Activated CD4-positive, alpha-beta T cell treated with anti-CD3 and anti-CD28 coated beads, Interleukin-2, amount 10 ng/mL, durations not matched to agents 7 days and 5 days (primary cell): ENCODE measurements at regions of chr6 and their contacts with region 1.

Region 1: DNA sequence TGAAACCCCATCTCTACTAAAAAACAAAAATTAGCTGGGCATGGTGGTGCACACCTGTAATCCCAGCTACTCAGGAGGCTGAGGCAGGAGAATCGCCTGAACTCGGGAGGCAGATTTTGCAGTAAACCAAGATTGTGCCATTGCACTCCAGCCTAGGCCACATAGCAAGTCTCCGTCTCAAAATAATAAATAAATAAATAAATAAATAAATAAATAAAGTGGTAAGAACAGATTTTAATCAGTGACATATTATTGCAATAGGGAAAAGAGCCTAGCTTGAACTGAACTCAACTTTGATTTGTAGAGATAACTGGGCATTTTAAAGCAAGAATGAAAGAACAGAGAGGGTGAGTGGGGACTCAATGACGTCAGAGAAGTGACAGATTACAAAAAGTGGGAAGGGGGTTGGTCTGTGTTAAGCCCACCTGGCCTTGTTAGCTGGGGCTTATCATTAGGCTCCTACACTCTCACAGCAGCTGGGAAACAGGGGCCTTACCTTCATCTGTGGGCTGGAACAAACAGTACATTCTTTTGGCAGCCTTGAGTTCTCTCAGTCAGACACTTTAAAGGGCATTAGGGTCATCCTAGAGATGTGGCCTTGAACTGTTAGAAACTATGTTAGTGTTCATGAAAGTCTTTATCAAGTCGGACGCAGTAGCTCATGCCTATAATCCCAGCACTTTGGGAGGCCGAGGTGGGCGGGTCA is 24.5 kb upstream of the KIFC1 start:
- DNase-seq: no peak
- H3K4me3 Mint-ChIP-seq: no peak overlapping the region
- H3K27ac Mint-ChIP-seq: no peak overlapping the region
- H3K4me1 Mint-ChIP-seq: peaks cover 3% of the 10 kb centered on the region
- H3K27me3 Mint-ChIP-seq: no peaks in the 10 kb centered on the region

Region 2: DNA sequence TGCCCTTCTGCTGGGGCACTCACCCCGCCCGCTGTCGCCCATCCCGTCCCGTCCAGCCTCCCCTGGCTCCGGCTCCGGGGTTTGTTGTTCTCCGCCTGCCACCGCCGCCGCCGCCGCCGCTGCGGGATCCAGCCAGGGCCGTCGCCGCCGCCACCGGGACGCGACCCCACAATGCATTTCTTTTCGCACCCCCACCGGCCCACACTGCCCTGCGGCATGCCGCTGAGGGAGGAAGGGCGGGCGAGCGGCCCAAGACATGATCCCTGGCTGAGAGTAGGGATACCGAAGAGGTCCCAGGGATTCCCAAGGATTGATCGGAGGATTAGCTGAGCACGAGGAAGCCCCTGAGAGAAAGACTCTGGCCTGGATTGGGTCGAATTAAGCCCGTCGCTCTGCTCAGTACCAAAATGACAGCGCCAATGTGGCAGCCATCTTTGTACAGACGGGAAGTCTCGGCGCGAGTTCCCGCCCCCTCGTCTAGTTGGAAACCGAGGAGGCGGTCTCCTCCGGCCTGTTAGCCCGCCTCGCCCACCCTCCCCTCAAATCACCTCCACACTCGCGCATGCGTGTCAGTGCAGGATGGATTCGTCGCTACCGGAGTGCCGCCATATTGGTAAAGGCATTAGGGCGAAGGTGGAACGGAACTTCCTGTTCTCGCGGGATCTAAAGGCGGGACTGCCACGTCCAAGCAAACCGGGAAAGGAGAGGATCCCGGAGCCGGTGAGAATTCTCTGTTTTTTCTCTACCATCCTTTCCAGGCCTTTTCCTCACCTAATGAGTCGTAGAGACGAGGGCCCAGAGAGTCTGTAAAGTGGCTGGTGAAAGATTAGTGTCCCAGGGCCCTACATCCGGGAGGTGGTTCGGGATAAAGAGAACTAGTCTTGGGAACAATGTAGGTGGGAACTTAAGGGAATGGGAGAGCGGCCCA is 166.7 kb before region 1 on chr6 and contains the starts of genes RXRB and SLC39A7:
- CTCF ChIA-PET with region 1: no interaction called
- POLR2A ChIA-PET with region 1: no interaction called
- DNase-seq: peak; percentile 100
- H3K4me3 Mint-ChIP-seq: peak within 1 kb of the TSS; percentile 100
- H3K27ac Mint-ChIP-seq: peak within 1 kb of the TSS; percentile 99
- H3K4me1 Mint-ChIP-seq: peaks cover 68% of the 10 kb centered on the region
- H3K27me3 Mint-ChIP-seq: no peaks in the 10 kb centered on the region
- total RNA-seq, gene RXRB: 45.0 to 46.2 TPM
- total RNA-seq, gene SLC39A7: 34.8 to 48.5 TPM

Region 3: DNA sequence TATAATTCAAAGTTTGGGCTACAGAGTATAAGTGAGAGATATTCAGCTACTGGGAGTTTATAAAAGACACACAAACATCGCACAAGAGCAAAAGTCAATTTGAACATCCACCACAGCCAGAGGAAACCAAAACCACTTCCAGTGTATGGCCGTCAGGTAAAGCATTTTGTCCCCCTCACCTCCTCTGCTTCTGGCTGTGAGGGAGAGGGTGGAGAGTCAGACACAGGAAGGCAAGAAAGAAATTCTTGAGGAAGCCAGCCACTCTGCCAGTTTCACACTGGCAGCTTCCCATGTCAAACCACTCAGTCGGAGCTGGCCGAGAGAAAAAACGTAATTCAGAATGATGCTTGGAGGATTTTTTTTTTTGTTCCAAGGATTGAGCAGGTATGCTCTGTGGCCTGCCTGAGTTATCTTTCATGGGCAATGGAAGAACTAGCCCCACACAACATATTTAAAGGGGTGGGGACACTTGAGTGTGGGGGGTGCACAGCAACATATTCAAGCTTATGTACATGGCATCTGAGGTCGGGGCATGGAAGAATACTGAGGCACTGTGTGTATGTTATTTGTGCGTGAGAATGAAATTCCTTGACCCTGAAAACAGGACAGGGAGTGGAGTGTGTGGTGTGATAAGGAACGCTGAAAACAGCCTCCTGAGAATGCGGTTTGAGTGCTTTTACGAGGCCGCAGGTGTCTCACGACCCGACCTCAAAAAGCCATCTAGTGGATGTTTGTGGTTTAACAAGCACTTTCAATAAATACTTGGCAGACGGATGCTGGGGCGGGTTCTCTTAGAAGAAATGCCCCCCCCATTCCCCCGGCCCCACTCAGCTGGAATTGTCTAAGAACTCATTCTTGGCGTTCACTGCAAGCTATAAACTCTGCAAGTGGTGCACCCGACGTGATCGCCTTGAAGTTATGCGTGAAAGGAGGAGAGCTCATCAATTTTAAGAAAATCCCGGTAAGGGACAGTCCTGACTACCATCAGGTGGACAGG is 22.2 kb before region 1 on chr6:
- CTCF ChIA-PET with region 1: interaction called, 11 read pairs
- POLR2A ChIA-PET with region 1: no interaction called
- DNase-seq: peak; percentile 82
- H3K4me3 Mint-ChIP-seq: peak overlapping the region; percentile 69
- H3K27ac Mint-ChIP-seq: peak overlapping the region; percentile 94
- H3K4me1 Mint-ChIP-seq: peaks cover 47% of the 10 kb centered on the region
- H3K27me3 Mint-ChIP-seq: no peaks in the 10 kb centered on the region

Region 4: DNA sequence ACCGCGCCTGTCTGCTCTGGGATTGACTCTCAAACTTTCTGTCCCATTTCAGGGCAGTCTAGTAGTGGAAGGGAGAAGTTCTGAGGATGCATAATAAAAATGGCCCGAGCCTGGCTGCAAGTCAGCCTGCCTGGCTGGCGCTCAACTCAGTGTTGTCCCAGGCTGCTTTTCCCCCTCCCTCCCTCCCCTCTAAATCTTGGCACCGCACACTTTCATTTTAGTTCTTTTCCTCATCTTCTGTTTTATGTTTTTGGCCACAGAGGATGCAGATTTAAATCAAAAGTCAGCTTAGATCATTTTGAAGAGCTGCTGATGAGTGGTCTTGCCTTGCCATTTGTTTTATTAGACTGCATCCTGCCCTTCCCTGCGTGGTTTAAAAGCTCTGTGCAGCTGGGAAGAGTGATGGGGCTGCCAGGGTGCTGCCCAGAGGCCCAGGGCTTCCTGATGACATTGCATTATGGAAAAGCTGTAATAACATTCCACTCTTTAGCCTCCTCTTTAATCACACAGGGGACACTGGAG is 350.8 kb after region 1 on chr6:
- CTCF ChIA-PET with region 1: no interaction called
- POLR2A ChIA-PET with region 1: no interaction called
- DNase-seq: no peak
- H3K4me3 Mint-ChIP-seq: no peak overlapping the region
- H3K27ac Mint-ChIP-seq: no peak overlapping the region
- H3K4me1 Mint-ChIP-seq: no peaks in the 10 kb centered on the region
- H3K27me3 Mint-ChIP-seq: peaks cover 21% of the 10 kb centered on the region